Ascending aorta (tissue), 2 donors: ENCODE measurements at regions of chr3 and their contacts with region 1.

Region 1: DNA sequence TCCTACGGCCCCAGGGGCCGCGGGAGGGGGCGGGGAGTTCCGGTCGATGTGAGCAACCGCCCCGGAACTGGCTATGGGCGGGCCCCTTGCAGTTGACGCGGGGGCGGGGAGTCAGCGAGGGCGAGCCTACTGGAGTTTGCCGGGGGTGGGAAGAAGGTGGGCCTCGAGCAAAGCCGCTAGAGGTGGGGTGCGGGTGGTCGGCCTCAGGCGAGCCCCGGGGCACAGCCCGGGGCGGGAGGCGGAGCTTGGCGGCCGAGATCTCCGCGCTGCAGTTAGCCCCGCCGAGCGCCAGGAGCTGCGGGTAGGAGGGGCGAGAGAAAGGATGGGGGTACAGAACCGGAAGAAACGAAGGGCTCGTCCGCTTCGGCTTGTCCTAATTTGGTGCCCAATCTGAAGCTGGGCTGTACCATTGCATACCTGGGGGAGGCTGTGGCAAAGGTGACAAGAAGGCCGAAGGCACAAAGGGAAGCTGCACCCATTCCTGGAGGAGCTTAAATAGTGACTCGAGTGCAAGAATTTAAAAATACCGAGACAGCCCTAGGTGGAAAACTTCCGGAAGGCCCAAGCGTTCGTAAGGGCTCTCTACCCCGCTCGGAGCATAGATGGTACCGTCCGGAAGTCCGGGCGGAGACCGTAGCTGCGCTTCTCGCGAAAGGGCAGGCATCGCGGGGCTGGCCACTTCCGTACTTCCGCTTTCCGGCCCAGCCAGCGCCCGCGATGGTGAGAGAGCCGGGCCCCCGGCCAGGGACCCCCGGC is at the starts of genes ARPC4 and TADA3:
- DNase-seq: peak; percentile 71 to 96
- H3K4me3 ChIP-seq: peak within 1 kb of the TSS; percentile 75 to 84
- H3K27ac ChIP-seq: peak within 1 kb of the TSS; percentile 95 to 98
- H3K4me1 ChIP-seq: peaks cover 6 to 22% of the 10 kb centered on the region in 2 donors
- H3K27me3 ChIP-seq: no peaks in the 10 kb centered on the region
- CTCF ChIP-seq: peak in 2 of 3 experiments; percentile 7 to 28
- total RNA-seq, gene ARPC4: 160 TPM
- total RNA-seq, gene TADA3: 106 TPM

Region 2: GRCh38 chr3:9430733-9431132 is 361.9 kb before region 1 on chr3:
- intact Hi-C with region 1: no loop called
- DNase-seq: no peak
- H3K4me3 ChIP-seq: no peak overlapping the region
- H3K27ac ChIP-seq: no peak overlapping the region
- H3K4me1 ChIP-seq: no peaks in the 10 kb centered on the region
- H3K27me3 ChIP-seq: no peaks in the 10 kb centered on the region
- CTCF ChIP-seq: no peak

Region 3: GRCh38 chr3:9749645-9750555 is 42.7 kb before region 1 on chr3 and contains the start of gene OGG1:
- intact Hi-C with region 1: loop called (anchors 1 kb)
- DNase-seq: peak; percentile 92 to 99
- H3K4me3 ChIP-seq: peak within 1 kb of the TSS; percentile 67 to 70
- H3K27ac ChIP-seq: peak within 1 kb of the TSS; percentile 76 to 84
- H3K4me1 ChIP-seq: peaks cover 4 to 14% of the 10 kb centered on the region in 2 donors
- H3K27me3 ChIP-seq: no peaks in the 10 kb centered on the region
- CTCF ChIP-seq: no peak
- total RNA-seq, gene OGG1: 36.0 TPM

Region 4: GRCh38 chr3:9809615-9810432 is 17.2 kb after region 1 on chr3 and contains the start of gene TTLL3:
- intact Hi-C with region 1: loop called (anchors 1 kb)
- DNase-seq: peak in 1 of 2 donors; percentile 90
- H3K4me3 ChIP-seq: peak within 1 kb of the TSS; percentile 71 to 80
- H3K27ac ChIP-seq: peak within 1 kb of the TSS; percentile 94 to 95
- H3K4me1 ChIP-seq: peaks cover 5 to 10% of the 10 kb centered on the region in 2 donors
- H3K27me3 ChIP-seq: no peaks in the 10 kb centered on the region
- CTCF ChIP-seq: no peak
- total RNA-seq, gene TTLL3: 47.0 TPM

Region 5: DNA sequence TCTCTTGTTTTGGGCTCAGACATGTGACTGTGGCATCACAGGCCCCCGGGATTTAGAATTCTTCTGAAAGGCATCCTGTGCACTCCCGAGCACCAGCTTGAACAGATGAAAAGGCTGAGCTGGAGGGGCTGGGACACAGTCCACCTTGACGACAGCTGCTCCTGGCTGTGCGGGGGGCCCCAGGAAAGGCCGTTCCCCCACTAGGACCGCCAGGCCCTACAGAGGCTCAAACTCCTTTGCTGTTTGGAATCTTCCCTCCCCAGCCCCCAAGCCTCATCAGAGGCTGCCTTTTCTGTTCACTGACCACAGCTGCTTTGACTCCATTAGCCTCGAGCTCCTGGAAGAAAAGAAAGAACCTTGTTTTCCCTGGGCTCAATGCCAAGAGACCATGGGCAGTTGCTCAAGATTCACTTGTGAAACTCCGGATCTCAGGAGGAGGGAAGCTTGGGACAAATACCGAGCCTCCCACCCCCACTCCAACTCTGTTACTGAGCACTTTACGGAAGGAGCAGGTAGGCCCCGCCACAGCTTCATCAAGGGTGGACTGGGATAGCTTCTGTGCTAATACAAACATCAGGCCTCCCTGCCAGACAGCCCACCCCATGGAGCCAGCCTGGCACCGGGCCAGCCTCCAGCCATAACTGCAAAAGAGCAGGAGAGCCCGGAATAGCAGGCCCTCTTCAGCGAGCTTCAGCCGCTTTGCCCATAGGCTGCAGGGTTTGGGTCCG is 71.8 kb after region 1 on chr3:
- intact Hi-C with region 1: no loop called
- DNase-seq: peak in 1 of 2 donors; percentile 81
- H3K4me3 ChIP-seq: peak overlapping the region in 1 of 2 donors; percentile 5
- H3K27ac ChIP-seq: peak overlapping the region; percentile 2 to 34
- H3K4me1 ChIP-seq: peaks cover 0 to 24% of the 10 kb centered on the region in 2 donors
- H3K27me3 ChIP-seq: no peaks in the 10 kb centered on the region
- CTCF ChIP-seq: no peak

Region 6: GRCh38 chr3:9915254-9916141 is 122.9 kb after region 1 on chr3:
- intact Hi-C with region 1: loop called (anchors 5 kb)
- DNase-seq: peak in 1 of 2 donors; percentile 85
- H3K4me3 ChIP-seq: peak overlapping the region; percentile 62 to 89
- H3K27ac ChIP-seq: peak overlapping the region; percentile 79 to 86
- H3K4me1 ChIP-seq: peaks cover 22 to 32% of the 10 kb centered on the region in 2 donors
- H3K27me3 ChIP-seq: no peaks in the 10 kb centered on the region
- CTCF ChIP-seq: peak in 2 of 3 experiments; percentile 32 to 56

Region 7: DNA sequence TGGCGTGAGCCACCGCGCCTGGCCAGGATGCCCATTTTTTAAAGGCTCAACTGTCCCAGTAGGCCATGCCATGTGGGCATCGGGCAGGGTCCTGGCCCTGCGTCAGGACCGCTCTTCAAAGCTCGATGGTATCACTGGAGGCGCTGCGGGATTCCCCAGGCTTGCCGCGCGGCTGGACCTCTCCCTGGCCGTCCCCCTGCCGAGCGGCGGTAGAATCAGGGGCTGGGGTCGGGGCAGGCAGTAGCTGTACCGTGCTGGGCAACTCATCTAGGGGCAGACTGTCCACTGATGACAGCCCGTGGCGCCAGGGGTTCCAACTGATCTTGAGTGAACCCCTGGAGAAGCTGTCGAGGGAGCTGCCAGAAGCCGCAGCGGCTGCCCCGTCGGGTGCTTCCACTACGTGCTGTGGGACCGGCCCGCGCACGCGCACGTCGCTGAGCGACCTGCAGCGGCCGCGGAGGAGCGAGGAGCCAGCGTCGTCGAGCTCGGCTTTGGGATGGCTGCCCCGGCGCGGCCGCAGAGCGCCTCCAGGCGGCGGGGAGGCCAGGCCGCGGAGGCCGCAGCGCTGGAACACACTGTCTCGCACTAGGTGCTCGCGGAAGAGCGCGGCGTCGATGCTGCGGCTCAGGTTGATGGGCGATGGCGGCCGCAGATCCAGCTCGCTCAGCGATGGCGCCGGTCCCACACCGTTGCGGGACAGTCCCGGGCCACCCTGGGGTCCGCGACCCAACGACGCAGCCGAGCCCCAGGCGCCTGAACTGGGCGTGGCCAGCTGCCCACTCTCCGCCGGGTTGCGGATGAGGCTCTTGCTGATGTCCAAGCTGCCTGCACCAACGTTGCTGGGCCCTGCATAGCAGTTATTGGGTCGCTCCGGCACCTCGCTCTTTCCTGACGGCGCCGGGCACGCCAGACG is 153.8 kb after region 1 on chr3:
- intact Hi-C with region 1: loop called (anchors 2 kb)
- DNase-seq: peak; percentile 65 to 93
- H3K4me3 ChIP-seq: peak overlapping the region; percentile 76 to 80
- H3K27ac ChIP-seq: peak overlapping the region; percentile 71 to 81
- H3K4me1 ChIP-seq: peaks cover 5 to 7% of the 10 kb centered on the region in 2 donors
- H3K27me3 ChIP-seq: no peaks in the 10 kb centered on the region
- CTCF ChIP-seq: peak; percentile 63 to 88 (median 76)

Region 8: GRCh38 chr3:10142707-10143566 is 350.4 kb after region 1 on chr3:
- intact Hi-C with region 1: loop called (anchors 1 kb)
- DNase-seq: no peak
- H3K4me3 ChIP-seq: peak overlapping the region; percentile 65 to 91
- H3K27ac ChIP-seq: peak overlapping the region; percentile 90 to 96
- H3K4me1 ChIP-seq: peaks cover 7 to 22% of the 10 kb centered on the region in 2 donors
- H3K27me3 ChIP-seq: no peaks in the 10 kb centered on the region
- CTCF ChIP-seq: no peak